ENCODE measurements at regions of chr7 and their contacts with region 1.

Region 1: GRCh38 chr7:44962483-44963251 is 16.1 kb downstream of the MYO1G start:
- DNase-seq: peak; percentile 66
- ATAC-seq: peak; percentile 75

Region 2: DNA sequence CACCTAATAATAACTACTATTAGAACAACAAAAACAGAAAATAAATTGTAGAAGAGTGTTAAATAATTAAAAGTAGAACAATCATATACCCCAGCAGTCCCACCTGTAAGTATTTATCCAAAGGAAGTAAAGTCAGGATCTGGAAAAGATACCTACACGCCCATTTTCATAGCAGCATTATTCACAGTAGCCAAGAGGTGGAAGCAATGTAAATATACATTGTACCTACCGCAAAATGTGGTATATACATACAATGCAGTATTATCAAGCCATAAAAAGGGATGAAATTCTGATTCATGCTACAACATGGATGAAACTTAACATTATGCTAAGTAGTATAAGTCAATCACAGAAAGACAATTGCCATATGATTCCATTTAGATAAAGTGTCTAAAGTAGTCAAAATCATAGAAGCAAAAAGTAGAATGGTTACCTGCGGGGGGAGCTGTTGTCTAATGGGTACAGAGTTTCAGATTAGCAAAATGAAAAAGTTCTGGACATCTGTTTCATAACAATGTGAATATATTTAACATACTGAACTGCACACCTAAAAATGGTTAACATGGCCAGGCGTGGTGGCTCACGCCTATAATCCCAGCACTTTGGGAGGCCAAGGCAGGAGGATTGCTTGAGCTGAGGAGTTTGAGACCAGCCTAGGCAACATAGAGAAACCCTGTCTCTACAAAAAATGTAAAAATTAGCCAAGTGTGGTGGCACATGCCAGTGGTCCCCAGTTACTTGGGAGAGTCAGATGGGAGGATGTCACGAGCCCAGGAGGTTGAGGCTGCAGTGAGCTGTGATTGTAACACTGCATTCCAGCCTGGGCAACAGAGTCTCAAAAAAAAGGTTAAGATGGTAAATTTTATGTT is 374.6 kb before region 1 on chr7:
- intact Hi-C with region 1: no loop called
- DNase-seq: no peak
- ATAC-seq: peak; percentile 76

Region 3: GRCh38 chr7:45136106-45137060 is 173.7 kb after region 1 on chr7:
- intact Hi-C with region 1: loop called (anchors 10 kb)
- DNase-seq: peak; percentile 77
- ATAC-seq: peak; percentile 88

Measured in sciatic nerve (tissue), 2 donors.